PC-9 (cell line): ENCODE measurements at regions of chr1 and their contacts with region 1.

Region 1: GRCh38 chr1:17304151-17304825 is 3.7 kb upstream of the PADI4 start:
- DNase-seq: peak; percentile 69 to 97
- H3K4me3 ChIP-seq: no peak overlapping the region; the same call in 1 of the 2 replicates
- H3K27ac ChIP-seq: peak overlapping the region; percentile 91
- H3K4me1 ChIP-seq: peaks cover 61% of the 10 kb centered on the region
- H3K27me3 ChIP-seq: no peaks in the 10 kb centered on the region
- CTCF ChIP-seq: no peak

Region 2: GRCh38 chr1:17292714-17293113 is 11.6 kb before region 1 on chr1:
- CTCF ChIA-PET with region 1: no interaction called
- POLR2A ChIA-PET with region 1: interaction called, 27 read pairs
- intact Hi-C with region 1: no loop called
- DNase-seq: peak in 1 of 2 experiments; percentile 74
- H3K4me3 ChIP-seq: no peak overlapping the region
- H3K27ac ChIP-seq: peak overlapping the region; percentile 73
- H3K4me1 ChIP-seq: peaks cover 54% of the 10 kb centered on the region
- H3K27me3 ChIP-seq: no peaks in the 10 kb centered on the region
- CTCF ChIP-seq: no peak

Region 3: DNA sequence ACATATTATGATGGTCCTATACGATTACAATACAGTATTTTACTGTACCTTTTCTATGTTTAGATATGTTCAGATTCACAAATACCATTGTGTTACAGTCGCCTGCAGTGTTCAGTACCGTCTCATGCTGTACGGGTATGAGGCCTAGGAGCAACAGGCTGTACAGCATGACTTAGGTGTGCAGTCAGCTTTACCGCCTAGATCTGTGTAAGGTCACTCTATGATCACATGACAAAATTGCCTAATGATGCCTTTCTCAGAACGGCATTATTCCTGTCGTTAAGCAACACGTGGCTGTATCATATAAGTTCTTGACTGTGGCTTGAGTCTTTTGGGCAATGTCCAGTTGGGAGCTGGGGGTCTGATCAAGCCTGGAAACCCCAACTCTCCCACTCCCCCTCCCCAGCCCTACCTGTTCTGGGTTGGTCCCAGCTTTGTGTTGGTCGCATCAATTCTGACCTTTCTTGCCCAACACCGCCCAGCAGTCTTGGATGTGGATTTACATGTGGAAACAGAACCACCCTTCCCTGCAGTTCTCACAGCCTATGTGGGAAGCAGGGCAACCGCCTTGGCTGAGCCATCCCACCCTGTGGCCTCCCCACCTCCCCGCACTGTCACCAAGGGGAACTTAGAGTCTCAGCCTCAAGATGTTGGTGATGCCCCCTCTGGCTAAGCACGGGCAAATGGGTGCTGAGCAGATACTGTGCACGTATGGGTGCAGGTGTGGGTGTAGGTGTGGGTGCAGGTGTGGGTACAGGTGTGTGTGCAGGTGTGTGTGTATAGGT is 370.6 kb after region 1 on chr1:
- CTCF ChIA-PET with region 1: no interaction called
- POLR2A ChIA-PET with region 1: interaction called, 10 read pairs
- intact Hi-C with region 1: no loop called
- DNase-seq: no peak
- H3K4me3 ChIP-seq: no peak overlapping the region
- H3K27ac ChIP-seq: no peak overlapping the region
- H3K4me1 ChIP-seq: no peaks in the 10 kb centered on the region
- H3K27me3 ChIP-seq: no peaks in the 10 kb centered on the region
- CTCF ChIP-seq: no peak